Sigmoid colon (tissue), 7 donors: ENCODE measurements at regions of chr3 and their contacts with region 1.

Region 1: GRCh38 chr3:27712136-27713077 is 9.7 kb downstream of the EOMES start:
- DNase-seq: peak; percentile 88
- H3K4me3 ChIP-seq: peak overlapping the region; percentile 33 to 59 (median 48)
- H3K27ac ChIP-seq: peak overlapping the region in 1 of 4 donors; percentile 27
- H3K4me1 ChIP-seq: peaks cover 0 to 31% (median 24%) of the 10 kb centered on the region in 4 donors
- H3K27me3 ChIP-seq: peaks cover 18 to 55% (median 31%) of the 10 kb centered on the region in 3 donors
- CTCF ChIP-seq: peak; percentile 53 to 66 (median 56)
- EP300 ChIP-seq: no peak
- POLR2A ChIP-seq: no peak

Region 2: DNA sequence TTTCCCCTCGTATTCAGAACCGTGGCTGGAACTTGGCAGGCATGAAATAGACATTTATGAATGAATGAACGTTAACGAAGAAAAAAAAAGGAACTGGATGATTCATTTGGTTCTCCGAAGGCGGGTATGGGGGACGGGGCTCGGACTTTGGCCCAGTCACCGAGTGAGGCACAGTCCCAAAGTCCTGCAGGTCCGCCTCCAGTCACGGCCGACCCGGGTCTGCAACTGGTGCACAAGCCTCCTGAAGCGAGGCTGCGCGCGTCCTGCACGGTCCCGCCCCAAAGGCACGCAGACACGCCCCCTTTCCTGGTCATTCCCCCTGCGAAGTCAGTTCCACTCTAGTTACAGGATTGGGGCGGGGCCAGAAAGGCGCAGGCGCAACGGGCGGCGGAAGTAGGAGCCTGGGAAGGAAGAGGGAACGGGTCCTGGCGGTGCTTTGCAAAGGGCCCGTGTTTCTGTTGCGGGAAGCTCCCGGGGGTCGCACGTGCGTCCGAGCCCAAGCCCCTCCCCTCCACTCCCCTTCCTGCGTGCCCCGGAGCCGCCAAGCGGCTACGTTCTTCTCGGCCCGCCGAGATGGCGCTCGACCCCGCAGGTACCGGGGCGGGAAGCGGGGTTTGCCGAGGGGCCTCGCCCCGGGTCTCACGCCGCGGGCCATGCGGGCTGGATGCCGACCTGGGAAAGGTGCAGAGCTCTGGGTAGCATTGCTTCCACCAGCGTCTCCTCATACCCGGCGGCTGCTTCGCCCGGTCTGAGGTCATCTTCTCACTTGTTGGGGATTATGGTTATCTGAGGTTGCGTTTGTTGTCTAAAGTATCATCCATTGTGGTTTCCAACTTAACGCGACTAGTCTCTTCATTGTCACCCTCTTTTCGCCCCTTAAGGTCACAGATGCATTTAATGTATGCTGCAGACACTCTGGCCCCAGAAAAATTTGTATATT is 529.1 kb after region 1 on chr3 and contains the start of gene CMC1:
- intact Hi-C with region 1: loop called (anchors 5 kb)
- DNase-seq: peak; percentile 98
- H3K4me3 ChIP-seq: peak within 1 kb of the TSS; percentile 67 to 98 (median 82)
- H3K27ac ChIP-seq: peak within 1 kb of the TSS; percentile 75 to 86 (median 80)
- H3K4me1 ChIP-seq: peaks cover 0 to 21% (median 18%) of the 10 kb centered on the region in 4 donors
- H3K27me3 ChIP-seq: no peaks in the 10 kb centered on the region
- CTCF ChIP-seq: no peak
- EP300 ChIP-seq: peak in 1 of 4 donors; percentile 22
- POLR2A ChIP-seq: peak; percentile 65 to 80
- total RNA-seq, gene CMC1: 6.1 to 16.9 (median 10.1) TPM

Region 3: GRCh38 chr3:28328188-28329151 is 616.1 kb after region 1 on chr3:
- intact Hi-C with region 1: loop called (anchors 2 kb)
- DNase-seq: no peak
- H3K4me3 ChIP-seq: no peak overlapping the region
- H3K27ac ChIP-seq: no peak overlapping the region
- H3K4me1 ChIP-seq: peaks cover 0 to 4% (median 0%) of the 10 kb centered on the region in 4 donors
- H3K27me3 ChIP-seq: no peaks in the 10 kb centered on the region
- CTCF ChIP-seq: peak; percentile 32 to 72 (median 52)
- EP300 ChIP-seq: no peak
- POLR2A ChIP-seq: no peak